ENCODE measurements at regions of chr14 and their contacts with region 1.

Region 1: DNA sequence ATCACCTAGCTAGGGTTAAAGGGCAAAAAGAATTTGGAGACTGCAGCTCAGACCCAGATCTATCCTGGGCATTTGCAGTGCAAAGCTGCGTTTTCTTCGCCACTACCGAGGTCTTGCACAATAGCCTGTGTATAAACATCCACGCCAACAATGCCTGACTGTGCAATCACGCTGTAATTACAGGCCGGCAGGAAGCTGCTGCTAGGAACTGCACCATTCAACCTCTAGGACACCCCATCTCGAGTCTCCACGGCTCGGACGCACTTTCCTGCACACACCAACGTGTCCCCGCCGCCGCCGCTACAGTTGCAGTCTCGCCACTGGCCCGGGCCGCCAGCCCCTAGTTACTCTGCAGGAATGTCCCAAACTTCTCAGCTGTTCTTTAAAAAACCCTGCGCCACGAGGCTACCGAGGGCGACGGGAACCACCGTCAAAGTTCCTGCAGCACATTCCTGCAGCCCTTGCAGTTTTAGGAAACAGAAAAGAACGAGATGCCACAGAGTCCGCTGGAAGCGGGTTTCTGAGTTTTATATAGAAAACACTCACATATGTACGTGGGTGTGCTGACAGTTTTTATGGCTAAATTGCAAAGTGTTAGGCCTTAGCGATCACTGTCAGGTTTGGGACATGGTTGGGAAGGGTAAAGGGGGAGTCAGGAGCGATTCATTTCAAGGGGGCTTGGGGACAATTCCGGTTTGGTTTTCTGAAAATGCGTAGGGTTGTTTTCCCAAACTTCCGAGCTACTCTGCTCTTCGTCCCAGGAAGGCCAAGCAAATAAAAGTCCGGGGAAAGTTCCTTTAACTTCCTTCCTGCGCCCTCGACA is 65.5 kb upstream of the PTGR2 start:
- DNase-seq: peak; percentile 77 to 89 (median 88)
- ATAC-seq: peak; percentile 78 to 79
- H3K4me3 ChIP-seq: peak overlapping the region; percentile 92
- H3K27ac ChIP-seq: peak overlapping the region; percentile 98
- H3K4me1 ChIP-seq: peaks cover 33% of the 10 kb centered on the region
- H3K27me3 ChIP-seq: no peaks in the 10 kb centered on the region

Region 2: DNA sequence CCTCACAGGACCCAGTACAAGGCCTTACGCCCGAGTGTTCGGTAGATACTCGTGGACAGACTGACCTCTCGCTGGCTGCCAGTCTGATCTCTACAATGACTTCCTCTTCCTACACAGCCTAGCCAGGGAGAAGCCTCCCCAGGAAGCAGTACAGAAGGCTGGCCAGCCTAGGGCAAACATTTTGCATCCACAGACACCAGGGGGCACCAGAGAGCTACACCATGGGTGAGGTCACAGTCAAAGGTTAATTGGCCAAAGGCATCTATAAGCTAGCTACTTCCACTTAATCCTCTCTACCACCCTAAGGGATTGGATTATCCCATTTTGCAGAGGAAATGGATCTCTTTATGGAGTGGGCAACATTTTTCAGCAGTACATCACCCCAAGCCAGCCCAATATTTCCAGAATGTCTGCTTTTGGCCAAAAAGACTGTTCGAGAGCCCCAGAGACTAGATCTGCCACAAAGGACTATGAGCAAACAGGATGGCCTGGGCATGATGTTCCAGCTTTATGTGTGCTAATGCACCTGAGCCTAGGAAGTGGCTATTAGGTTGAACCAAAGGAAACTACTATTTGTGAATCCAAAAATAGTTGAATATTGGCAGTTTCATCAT is 57.3 kb before region 1 on chr14:
- intact Hi-C with region 1: loop called in 2 of 4 experiments (anchors 5 to 10 kb)
- DNase-seq: peak; percentile 87 to 94 (median 92)
- ATAC-seq: peak; percentile 68 to 71
- H3K4me3 ChIP-seq: no peak overlapping the region
- H3K27ac ChIP-seq: peak overlapping the region; percentile 2
- H3K4me1 ChIP-seq: peaks cover 5% of the 10 kb centered on the region
- H3K27me3 ChIP-seq: no peaks in the 10 kb centered on the region

Region 3: GRCh38 chr14:73753959-73754882 is 31.9 kb before region 1 on chr14:
- intact Hi-C with region 1: loop called in 2 of 4 experiments (anchors 5 kb)
- DNase-seq: peak in 2 of 3 donors; percentile 69 to 74
- ATAC-seq: peak; percentile 2 to 9
- H3K4me3 ChIP-seq: no peak overlapping the region
- H3K27ac ChIP-seq: peak overlapping the region; percentile 92
- H3K4me1 ChIP-seq: peaks cover 70% of the 10 kb centered on the region
- H3K27me3 ChIP-seq: no peaks in the 10 kb centered on the region

Region 4: GRCh38 chr14:73825551-73826188 is 39.6 kb after region 1 on chr14:
- intact Hi-C with region 1: loop called in 1 of 4 experiments (anchors 5 kb)
- DNase-seq: peak; percentile 94 to 98 (median 95)
- ATAC-seq: peak; percentile 92 to 94
- H3K4me3 ChIP-seq: no peak overlapping the region
- H3K27ac ChIP-seq: no peak overlapping the region
- H3K4me1 ChIP-seq: no peaks in the 10 kb centered on the region
- H3K27me3 ChIP-seq: no peaks in the 10 kb centered on the region

Measured in right cardiac atrium (tissue), 5 donors.